Activated CD4-positive, alpha-beta memory T cell treated with anti-CD3 and anti-CD28 coated beads, Interleukin-2, amount 10 ng/mL, durations not matched to agents 7 days and 5 days (primary cell): ENCODE measurements at regions of chr14 and their contacts with region 1.

Region 1: DNA sequence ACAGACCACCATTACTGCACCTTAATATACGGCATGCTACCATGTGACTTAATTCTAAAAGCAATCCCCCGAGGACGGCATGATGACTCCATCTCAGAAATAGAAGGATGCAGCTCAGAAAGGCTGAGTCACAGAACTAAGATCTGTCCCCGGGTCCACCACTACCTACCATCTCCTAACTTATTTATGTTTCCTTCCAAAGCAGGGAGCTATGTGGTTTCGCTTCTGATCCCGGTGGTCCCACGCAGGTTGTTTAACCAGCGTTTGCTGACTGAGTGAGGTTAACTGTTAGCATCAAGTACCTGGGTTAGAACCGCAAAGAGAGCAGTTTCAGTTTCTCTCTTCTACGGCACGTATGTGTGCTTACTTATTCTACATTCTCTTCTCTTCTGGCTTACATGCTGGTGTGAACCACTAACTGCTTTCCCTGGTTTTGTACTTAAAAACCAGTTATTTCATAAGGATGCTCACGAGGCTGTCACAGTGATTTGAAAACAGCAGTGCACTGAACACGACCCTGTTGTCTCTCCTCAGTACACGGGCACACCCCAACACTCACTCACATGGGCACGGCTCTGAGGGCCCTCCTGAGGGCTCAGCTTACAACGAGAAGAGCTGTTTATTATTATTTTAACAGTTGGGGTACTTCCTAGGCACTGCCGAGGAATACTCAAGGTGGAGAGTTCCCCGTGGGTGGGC is 66.7 kb downstream of the CCDC88C start:
- DNase-seq: peak; percentile 76
- H3K4me3 Mint-ChIP-seq: peak overlapping the region; percentile 71
- H3K27ac Mint-ChIP-seq: peak overlapping the region; percentile 96
- H3K4me1 Mint-ChIP-seq: peaks cover 90% of the 10 kb centered on the region
- H3K27me3 Mint-ChIP-seq: no peaks in the 10 kb centered on the region

Region 2: DNA sequence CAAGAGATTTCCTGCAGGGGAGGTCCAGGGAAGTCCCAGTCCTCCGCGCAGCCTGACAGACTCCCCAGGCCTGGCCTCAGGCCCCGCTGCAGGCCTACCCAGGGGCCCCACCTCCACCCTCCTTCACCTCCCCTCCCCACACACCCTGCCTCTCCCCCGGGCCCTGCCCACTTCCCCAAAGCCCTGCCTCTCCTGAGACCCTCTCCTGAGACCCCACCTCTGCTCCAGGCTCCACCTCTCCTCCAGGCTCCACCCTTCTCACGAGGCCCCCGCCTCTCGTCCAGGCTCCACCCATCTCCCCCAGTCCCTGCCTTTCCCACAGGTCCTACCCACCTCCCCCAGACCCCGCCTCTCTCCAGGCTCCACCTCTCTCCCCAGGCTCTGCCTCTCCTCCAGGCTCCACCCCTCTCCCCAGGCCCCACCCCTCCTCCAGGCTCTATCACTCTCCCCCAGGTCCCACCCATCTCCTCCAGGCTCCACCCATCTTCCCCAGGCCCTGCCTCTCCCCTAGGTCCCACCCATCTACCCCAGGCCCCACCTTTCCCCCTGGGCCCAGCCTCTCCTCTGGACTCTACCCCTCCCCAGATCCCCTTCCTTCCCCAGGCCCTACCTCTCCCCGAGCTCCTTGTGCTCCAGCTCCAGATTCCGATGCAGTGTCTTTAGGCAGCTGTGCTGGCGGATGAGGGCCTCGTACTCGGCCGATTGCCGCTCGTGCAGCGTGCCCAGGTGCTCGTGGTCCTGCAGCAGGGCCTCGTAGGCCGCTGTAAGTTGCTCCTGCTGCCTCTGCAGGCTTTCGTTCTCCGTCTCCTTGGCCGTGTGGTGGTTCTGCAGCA is 47.7 kb before region 1 on chr14:
- CTCF ChIA-PET with region 1: no interaction called
- POLR2A ChIA-PET with region 1: no interaction called
- DNase-seq: peak; percentile 77
- H3K4me3 Mint-ChIP-seq: no peak overlapping the region
- H3K27ac Mint-ChIP-seq: peak overlapping the region; percentile 82
- H3K4me1 Mint-ChIP-seq: peaks cover 50% of the 10 kb centered on the region
- H3K27me3 Mint-ChIP-seq: no peaks in the 10 kb centered on the region

Region 3: GRCh38 chr14:91323671-91324605 is 27.0 kb before region 1 on chr14:
- CTCF ChIA-PET with region 1: interaction called, 22 read pairs
- POLR2A ChIA-PET with region 1: interaction called, 38 read pairs
- DNase-seq: peak; percentile 92
- H3K4me3 Mint-ChIP-seq: peak overlapping the region; percentile 76
- H3K27ac Mint-ChIP-seq: peak overlapping the region; percentile 99
- H3K4me1 Mint-ChIP-seq: peaks cover 64% of the 10 kb centered on the region
- H3K27me3 Mint-ChIP-seq: no peaks in the 10 kb centered on the region

Region 4: GRCh38 chr14:91361233-91362063 is 10.5 kb after region 1 on chr14:
- CTCF ChIA-PET with region 1: interaction called, 5 read pairs
- POLR2A ChIA-PET with region 1: interaction called, 24 read pairs
- DNase-seq: no peak
- H3K4me3 Mint-ChIP-seq: no peak overlapping the region
- H3K27ac Mint-ChIP-seq: peak overlapping the region; percentile 38
- H3K4me1 Mint-ChIP-seq: peaks cover 71% of the 10 kb centered on the region
- H3K27me3 Mint-ChIP-seq: no peaks in the 10 kb centered on the region

Region 5: DNA sequence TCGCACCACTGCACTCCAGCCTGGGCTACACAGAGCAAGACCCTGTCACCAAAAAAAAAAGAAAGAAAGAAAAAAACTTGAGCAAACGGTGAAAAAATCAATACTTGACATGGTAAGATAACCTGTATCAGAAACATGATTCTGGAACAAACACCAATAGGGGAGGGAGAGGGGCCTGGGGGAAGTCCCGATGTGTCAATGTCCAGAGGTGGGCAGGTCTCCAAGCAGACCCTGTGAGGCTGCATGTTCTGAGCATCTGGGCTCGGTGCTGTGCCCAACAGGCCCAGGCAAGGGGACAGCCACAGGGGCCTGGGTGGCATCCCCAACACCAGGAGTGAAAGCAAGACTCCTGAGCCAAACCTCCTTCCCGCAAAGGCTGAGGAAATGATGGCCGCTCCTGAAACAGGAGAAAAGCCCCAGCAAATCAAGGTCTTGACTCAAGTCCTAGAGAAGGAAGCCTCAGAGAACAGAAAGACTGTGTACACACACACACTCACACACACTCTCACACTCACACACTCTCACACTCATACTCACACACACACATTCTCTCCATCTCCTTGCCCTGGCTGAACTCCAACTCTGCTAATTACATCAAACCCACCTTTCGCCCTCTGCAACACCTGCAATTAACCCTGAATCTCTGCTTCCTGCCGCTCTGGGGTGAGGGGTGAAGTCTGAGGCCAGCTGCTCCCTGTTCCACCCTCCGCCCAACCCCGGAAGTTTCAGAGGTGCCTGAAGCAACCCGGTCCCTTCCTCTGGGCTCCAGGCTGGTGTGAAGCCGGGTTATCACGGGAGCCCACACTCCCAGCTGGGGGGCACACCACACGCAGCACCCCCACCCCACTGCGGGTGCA is 46.2 kb after region 1 on chr14:
- CTCF ChIA-PET with region 1: interaction called, 16 read pairs
- POLR2A ChIA-PET with region 1: interaction called, 54 read pairs
- DNase-seq: peak; percentile 81
- H3K4me3 Mint-ChIP-seq: peak overlapping the region; percentile 68
- H3K27ac Mint-ChIP-seq: peak overlapping the region; percentile 85
- H3K4me1 Mint-ChIP-seq: peaks cover 95% of the 10 kb centered on the region
- H3K27me3 Mint-ChIP-seq: no peaks in the 10 kb centered on the region

Region 6: GRCh38 chr14:91510174-91511042 is 159.4 kb after region 1 on chr14 and contains the start of gene PPP4R3A:
- CTCF ChIA-PET with region 1: no interaction called
- POLR2A ChIA-PET with region 1: interaction called, 14 read pairs
- DNase-seq: peak; percentile 94
- H3K4me3 Mint-ChIP-seq: peak within 1 kb of the TSS; percentile 98
- H3K27ac Mint-ChIP-seq: peak within 1 kb of the TSS; percentile 100
- H3K4me1 Mint-ChIP-seq: peaks cover 24% of the 10 kb centered on the region
- H3K27me3 Mint-ChIP-seq: no peaks in the 10 kb centered on the region
- total RNA-seq, gene PPP4R3A: 118 to 123 TPM